CD8-positive, alpha-beta memory T cell (primary cell): ENCODE measurements at regions of chr3 and their contacts with region 1.

Region 1: GRCh38 chr3:134473868-134474546 is 11.8 kb downstream of the ANAPC13 start:
- DNase-seq: peak; percentile 53 to 73 (median 69)
- H3K4me3 ChIP-seq: no peak overlapping the region
- H3K4me3 Mint-ChIP-seq: no peak overlapping the region
- H3K27ac ChIP-seq: no peak overlapping the region
- H3K27ac Mint-ChIP-seq: no peak overlapping the region
- H3K4me1 ChIP-seq: peaks cover 3% of the 10 kb centered on the region
- H3K4me1 Mint-ChIP-seq: peaks cover 0 to 5% (median 2%) of the 10 kb centered on the region in 3 donors
- H3K27me3 ChIP-seq: no peaks in the 10 kb centered on the region
- H3K27me3 Mint-ChIP-seq: no peaks in the 10 kb centered on the region

Region 2: DNA sequence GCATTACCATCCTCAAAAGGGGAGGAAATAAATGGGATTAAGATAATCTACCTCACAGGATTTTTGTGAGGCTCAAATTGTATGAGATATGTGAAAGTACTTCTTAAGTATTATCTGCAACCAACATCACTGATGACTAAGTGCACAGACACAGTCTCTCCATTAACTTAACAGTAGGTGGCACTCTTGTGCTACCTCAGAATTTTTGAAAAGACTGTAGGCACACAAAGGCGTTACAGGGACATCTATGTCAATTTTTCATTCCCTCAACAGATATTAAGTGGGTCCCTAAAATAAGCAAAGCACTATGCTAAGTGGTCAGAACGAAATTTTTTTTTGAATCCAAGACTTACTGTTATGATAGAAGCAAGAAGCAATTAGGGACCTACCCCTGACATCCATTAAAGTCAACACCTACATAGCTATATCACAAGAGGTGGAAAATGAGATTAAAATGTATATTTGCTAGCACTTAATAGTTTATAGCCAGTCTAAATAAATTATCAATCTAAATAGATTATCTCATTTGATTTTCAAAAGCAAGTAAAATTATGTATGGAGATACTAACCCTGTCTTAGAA is 276.2 kb before region 1 on chr3:
- CTCF ChIA-PET with region 1: interaction called, 25 read pairs
- POLR2A ChIA-PET with region 1: no interaction called
- DNase-seq: peak in 2 of 5 donors; percentile 21 to 33
- H3K4me3 ChIP-seq: no peak overlapping the region
- H3K4me3 Mint-ChIP-seq: no peak overlapping the region
- H3K27ac ChIP-seq: no peak overlapping the region
- H3K27ac Mint-ChIP-seq: no peak overlapping the region
- H3K4me1 ChIP-seq: no peaks in the 10 kb centered on the region
- H3K4me1 Mint-ChIP-seq: peaks cover 0 to 5% (median 0%) of the 10 kb centered on the region in 3 donors
- H3K27me3 ChIP-seq: no peaks in the 10 kb centered on the region
- H3K27me3 Mint-ChIP-seq: no peaks in the 10 kb centered on the region

Region 3: DNA sequence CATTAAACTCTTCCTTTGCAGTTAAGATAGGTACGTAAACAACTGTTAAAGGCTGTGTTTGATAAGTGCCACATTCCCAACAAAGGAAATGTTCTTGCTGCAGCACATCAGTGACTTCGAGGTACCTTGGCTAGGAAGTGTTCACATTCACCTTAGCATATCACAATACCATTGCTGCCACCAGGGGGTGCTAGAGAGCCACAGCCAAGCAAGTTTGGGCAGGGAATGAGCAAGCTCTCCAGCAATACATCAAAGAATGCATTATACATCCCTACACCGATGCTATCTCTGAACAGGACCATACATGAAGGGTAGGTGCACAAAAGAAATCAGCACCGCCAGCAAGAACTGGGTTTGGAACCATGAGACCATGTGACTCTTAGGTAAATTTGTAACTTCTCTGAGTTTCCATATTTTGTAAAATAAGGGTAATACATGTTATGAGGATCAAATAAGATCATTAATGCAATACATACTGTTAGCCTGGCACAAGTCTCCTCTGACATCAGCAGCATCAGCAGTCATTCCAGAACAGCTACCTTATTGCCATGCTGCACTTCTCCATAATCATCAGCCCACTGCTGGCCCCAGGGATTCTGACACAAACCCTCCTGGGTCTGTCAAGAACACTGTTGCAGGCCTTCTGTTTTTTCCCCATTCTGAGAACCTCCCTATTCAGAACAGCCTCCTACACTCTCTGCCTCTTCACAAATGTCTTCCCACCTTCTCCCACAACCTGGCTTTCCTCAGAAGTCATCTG is 260.9 kb before region 1 on chr3:
- CTCF ChIA-PET with region 1: interaction called, 35 read pairs
- POLR2A ChIA-PET with region 1: no interaction called
- DNase-seq: peak; percentile 61 to 86 (median 79)
- H3K4me3 ChIP-seq: no peak overlapping the region
- H3K4me3 Mint-ChIP-seq: no peak overlapping the region
- H3K27ac ChIP-seq: no peak overlapping the region
- H3K27ac Mint-ChIP-seq: peak overlapping the region in 4 of 8 donors; percentile 27 to 89 (median 55)
- H3K4me1 ChIP-seq: no peaks in the 10 kb centered on the region
- H3K4me1 Mint-ChIP-seq: peaks cover 24 to 32% (median 31%) of the 10 kb centered on the region in 3 donors
- H3K27me3 ChIP-seq: no peaks in the 10 kb centered on the region
- H3K27me3 Mint-ChIP-seq: no peaks in the 10 kb centered on the region

Region 4: DNA sequence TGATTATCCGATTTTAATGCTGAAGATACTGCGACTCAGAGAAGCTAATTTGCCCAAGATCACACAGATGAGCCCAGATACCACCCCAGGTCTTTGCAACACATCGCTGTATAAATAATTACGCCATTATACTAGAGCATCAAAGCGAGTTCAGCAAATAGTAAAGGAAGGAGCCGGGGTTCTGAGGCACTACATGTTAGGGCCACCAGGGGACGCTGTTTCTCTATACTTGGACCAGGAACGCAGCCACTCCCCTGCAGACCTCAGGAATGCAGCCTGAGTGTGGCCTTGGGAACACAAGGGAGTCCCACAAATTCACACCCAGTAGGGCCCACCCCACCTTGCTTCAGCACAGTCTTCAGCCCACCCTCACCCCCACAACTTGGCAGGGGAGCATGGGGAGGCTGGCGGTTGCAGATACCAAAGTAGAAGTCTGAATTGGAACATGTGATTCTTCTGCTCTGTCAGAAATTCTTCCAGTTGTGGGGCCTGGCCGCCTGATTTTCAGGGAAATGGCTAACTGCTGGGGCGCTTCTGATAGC is 165.6 kb before region 1 on chr3:
- CTCF ChIA-PET with region 1: interaction called, 23 read pairs
- POLR2A ChIA-PET with region 1: no interaction called
- DNase-seq: peak; percentile 50 to 76 (median 62)
- H3K4me3 ChIP-seq: peak overlapping the region; percentile 7
- H3K4me3 Mint-ChIP-seq: peak overlapping the region in 4 of 7 donors; percentile 2 to 53 (median 34)
- H3K27ac ChIP-seq: no peak overlapping the region
- H3K27ac Mint-ChIP-seq: peak overlapping the region in 1 of 8 donors; percentile 8
- H3K4me1 ChIP-seq: no peaks in the 10 kb centered on the region
- H3K4me1 Mint-ChIP-seq: peaks cover 5 to 7% (median 5%) of the 10 kb centered on the region in 3 donors
- H3K27me3 ChIP-seq: peaks cover 5% of the 10 kb centered on the region
- H3K27me3 Mint-ChIP-seq: peaks cover 36 to 49% of the 10 kb centered on the region in 2 donors

Region 5: DNA sequence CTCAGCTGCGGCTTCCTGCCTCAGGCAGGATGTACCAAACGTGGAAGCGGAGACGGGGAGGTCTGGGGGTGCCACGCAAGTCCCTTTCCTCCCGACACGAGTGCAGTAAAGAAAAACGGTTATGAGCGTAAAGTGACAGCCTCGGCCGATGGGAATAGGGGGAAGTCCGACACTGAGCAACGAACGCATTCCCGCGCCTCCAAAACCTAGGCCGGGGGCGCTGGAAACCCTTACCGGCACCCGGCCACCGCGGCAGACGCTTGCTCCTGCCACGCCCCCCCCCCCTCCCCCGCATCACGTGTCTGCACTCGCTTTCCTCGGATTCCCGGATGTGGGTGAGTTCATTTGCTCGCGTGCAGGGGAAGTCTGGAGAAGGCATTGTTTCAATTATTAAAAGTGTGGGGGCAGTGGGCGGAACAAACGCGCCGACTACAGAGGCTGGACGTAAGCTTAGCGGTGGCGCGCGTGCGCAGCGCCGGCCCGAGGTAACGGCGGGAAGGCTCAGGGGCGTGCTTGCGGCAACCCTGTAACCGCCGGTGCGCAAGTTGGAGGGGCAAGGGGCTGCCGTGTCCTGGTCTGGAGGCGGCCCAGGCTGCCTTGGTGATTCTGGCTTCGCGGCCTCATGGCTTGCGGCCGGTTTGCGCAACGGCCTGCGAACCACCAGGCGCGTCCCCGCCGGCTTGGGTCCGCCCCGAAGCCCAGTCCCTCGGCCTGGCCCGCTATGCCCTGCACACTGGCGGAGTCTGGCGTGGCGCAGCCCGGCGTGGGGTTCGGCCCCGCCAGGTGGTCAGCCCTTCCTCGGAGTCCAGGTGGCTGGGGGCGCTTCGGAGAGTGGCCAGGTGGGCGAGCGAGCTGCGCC is 11.9 kb after region 1 on chr3 and contains the starts of genes ANAPC13 and CEP63:
- CTCF ChIA-PET with region 1: interaction called, 40 read pairs
- POLR2A ChIA-PET with region 1: interaction called, 3 read pairs
- DNase-seq: peak; percentile 87 to 97 (median 95)
- H3K4me3 ChIP-seq: peak within 1 kb of the TSS; percentile 99
- H3K4me3 Mint-ChIP-seq: peak within 1 kb of the TSS; percentile 93 to 100 (median 97)
- H3K27ac ChIP-seq: peak within 1 kb of the TSS; percentile 88
- H3K27ac Mint-ChIP-seq: peak within 1 kb of the TSS; percentile 97 to 100 (median 98)
- H3K4me1 ChIP-seq: peaks cover 33% of the 10 kb centered on the region
- H3K4me1 Mint-ChIP-seq: peaks cover 44 to 65% (median 56%) of the 10 kb centered on the region in 3 donors
- H3K27me3 ChIP-seq: no peaks in the 10 kb centered on the region
- H3K27me3 Mint-ChIP-seq: peaks cover 0 to 2% of the 10 kb centered on the region in 2 donors
- total RNA-seq, gene ANAPC13: 41.0 to 42.0 TPM
- total RNA-seq, gene CEP63: 21.1 to 21.3 TPM

Region 6: GRCh38 chr3:134640872-134641470 is 167.0 kb after region 1 on chr3:
- CTCF ChIA-PET with region 1: no interaction called
- POLR2A ChIA-PET with region 1: no interaction called
- DNase-seq: no peak
- H3K4me3 ChIP-seq: no peak overlapping the region
- H3K4me3 Mint-ChIP-seq: no peak overlapping the region
- H3K27ac ChIP-seq: no peak overlapping the region
- H3K27ac Mint-ChIP-seq: no peak overlapping the region
- H3K4me1 ChIP-seq: no peaks in the 10 kb centered on the region
- H3K4me1 Mint-ChIP-seq: no peaks in the 10 kb centered on the region
- H3K27me3 ChIP-seq: no peaks in the 10 kb centered on the region
- H3K27me3 Mint-ChIP-seq: no peaks in the 10 kb centered on the region